Activated CD4-positive, alpha-beta T cell treated with anti-CD3 and anti-CD28 coated beads, Interleukin-2, amount 10 ng/mL, durations not matched to agents 7 days and 5 days (primary cell): ENCODE measurements at regions of chr15 and their contacts with region 1.

Region 1: DNA sequence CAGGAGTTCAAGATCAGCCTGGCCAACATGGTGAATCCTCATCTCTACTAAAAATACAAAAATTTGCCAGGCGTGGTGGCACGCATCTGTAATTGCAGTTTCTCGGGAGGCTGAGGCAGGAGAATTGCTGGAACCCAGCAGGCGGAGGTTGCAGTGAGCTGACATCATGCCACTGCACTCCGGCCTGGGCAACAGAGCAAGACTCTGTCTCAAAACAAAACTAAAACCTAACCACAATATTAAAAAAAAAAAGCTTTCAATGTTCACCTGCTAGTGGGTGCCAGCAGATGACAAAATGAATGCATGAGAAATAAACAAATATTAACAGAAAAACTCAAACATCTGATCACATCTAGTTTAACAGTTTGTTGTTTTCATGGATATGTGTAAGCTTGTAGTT is 9.0 kb downstream of the SLC24A1 start:
- DNase-seq: no peak
- H3K4me3 Mint-ChIP-seq: no peak overlapping the region
- H3K27ac Mint-ChIP-seq: no peak overlapping the region
- H3K4me1 Mint-ChIP-seq: peaks cover 14% of the 10 kb centered on the region
- H3K27me3 Mint-ChIP-seq: no peaks in the 10 kb centered on the region

Region 2: DNA sequence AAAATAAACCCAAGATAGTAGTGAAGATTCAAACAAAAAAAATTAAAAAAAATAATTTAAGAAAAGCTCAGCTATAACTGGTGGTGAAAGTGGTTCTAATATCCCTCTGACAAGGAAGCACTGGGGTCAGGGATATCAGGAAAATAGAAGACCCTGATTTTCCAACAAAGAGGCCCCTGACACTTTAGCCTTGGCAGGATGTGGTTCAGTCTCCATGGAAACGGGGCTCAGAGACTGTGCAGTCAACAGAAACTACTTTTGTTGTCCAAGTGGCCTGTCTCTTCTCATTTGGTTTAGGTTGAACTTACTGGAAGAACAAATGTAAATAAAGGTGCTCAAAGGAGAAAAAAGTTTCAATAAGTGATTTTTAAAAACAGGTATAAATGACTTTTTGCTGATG is 47.1 kb before region 1 on chr15:
- CTCF ChIA-PET with region 1: no interaction called
- POLR2A ChIA-PET with region 1: no interaction called
- DNase-seq: peak; percentile 78
- H3K4me3 Mint-ChIP-seq: peak overlapping the region; percentile 34
- H3K27ac Mint-ChIP-seq: peak overlapping the region; percentile 84
- H3K4me1 Mint-ChIP-seq: peaks cover 34% of the 10 kb centered on the region
- H3K27me3 Mint-ChIP-seq: no peaks in the 10 kb centered on the region

Region 3: GRCh38 chr15:65641768-65642475 is 11.2 kb after region 1 on chr15:
- CTCF ChIA-PET with region 1: interaction called, 11 read pairs
- POLR2A ChIA-PET with region 1: no interaction called
- DNase-seq: no peak
- H3K4me3 Mint-ChIP-seq: no peak overlapping the region
- H3K27ac Mint-ChIP-seq: no peak overlapping the region
- H3K4me1 Mint-ChIP-seq: peaks cover 10% of the 10 kb centered on the region
- H3K27me3 Mint-ChIP-seq: no peaks in the 10 kb centered on the region

Region 4: DNA sequence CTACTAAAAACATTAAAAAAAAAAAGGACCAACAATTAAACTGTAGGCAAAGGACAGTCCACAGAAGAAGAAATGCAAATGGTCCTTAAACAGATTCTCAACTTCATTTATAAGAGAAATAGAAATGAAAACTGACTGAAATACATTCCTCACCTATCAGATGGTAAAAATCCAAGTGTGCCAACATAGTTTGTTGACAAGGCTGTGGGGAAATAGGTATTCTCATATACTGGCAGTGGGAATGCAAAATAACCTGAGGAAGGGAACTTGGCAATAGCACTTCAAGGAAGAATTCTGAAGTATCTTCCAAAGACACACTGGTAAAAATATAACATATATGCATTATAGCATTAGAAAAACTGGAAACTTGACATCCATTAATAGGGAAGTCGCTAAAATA is 44.8 kb after region 1 on chr15:
- CTCF ChIA-PET with region 1: no interaction called
- POLR2A ChIA-PET with region 1: no interaction called
- DNase-seq: no peak
- H3K4me3 Mint-ChIP-seq: no peak overlapping the region
- H3K27ac Mint-ChIP-seq: no peak overlapping the region
- H3K4me1 Mint-ChIP-seq: no peaks in the 10 kb centered on the region
- H3K27me3 Mint-ChIP-seq: no peaks in the 10 kb centered on the region